Gastrocnemius medialis (tissue), 4 donors: ENCODE measurements at regions of chrX and their contacts with region 1.

Region 1: DNA sequence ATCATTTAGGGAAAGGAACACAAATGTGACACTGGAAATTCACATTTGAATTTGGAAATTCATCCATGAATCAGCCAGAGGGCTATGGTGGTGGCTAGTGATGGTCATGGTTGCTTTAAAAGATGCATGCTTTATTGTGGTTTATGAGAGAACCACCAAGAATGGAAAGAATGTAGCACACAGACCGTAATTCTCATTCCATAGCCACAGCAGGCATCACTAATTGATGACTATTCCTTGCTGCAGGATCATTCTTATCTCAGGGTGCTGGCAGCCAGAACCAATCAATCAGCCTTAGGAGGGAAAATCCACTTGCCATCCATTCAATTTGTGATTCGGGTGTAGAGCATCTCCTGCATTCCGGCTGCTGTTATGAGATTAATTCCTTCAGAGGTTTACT is 115.6 kb downstream of the DHRSX start:
- DNase-seq: no peak
- ATAC-seq: no peak
- H3K4me3 ChIP-seq: no peak overlapping the region
- H3K27ac ChIP-seq: no peak overlapping the region
- H3K4me1 ChIP-seq: peaks cover 22 to 25% of the 10 kb centered on the region in 2 donors
- H3K27me3 ChIP-seq: no peaks in the 10 kb centered on the region
- CTCF ChIP-seq: no peak
- POLR2A ChIP-seq: no peak

Region 2: GRCh38 chrX:2371026-2371711 is 14.1 kb before region 1 on chrX:
- in situ Hi-C with region 1: no loop called
- intact Hi-C with region 1: loop called (anchors 2 kb)
- DNase-seq: no peak
- ATAC-seq: no peak
- H3K4me3 ChIP-seq: no peak overlapping the region
- H3K27ac ChIP-seq: no peak overlapping the region
- H3K4me1 ChIP-seq: no peaks in the 10 kb centered on the region
- H3K27me3 ChIP-seq: no peaks in the 10 kb centered on the region
- CTCF ChIP-seq: no peak
- POLR2A ChIP-seq: no peak

Region 3: DNA sequence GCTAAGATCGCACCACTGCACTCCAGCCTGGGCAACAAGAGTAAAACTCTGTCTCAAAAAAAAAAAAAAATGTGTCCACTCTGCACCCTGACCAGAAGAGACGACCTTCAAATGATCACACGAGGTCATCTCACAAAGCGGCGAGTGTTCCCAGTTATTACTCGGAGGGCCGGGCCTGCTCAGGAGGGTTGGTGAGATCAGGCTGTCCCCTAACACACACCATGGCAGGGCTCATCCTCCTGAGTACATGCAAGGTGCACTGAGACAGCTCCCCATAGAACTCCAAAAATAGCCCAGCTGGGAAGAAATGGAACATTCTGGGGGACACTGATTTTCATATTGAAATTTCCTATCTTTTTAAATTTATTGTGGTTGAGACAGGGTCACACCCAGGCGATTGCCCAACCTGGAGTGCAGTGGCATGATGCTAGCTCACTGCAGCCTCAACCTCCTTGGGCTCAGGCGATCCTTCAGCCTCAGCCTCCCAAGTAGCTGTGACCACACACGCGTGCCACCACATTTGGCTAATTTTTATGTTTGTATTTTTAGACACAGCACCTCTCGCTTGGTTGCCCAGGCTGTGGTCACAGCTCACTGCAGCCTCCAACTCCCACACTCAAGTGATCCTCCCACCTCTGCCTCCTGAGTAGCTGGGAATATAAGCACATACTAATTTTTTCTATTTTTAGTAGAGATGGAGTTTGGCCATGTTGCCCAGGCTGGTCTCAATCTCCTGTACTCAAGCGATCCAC is 64.1 kb after region 1 on chrX:
- in situ Hi-C with region 1: loop called in 1 of 4 experiments (anchors 10 kb)
- intact Hi-C with region 1: no loop called
- DNase-seq: no peak
- ATAC-seq: no peak
- H3K4me3 ChIP-seq: no peak overlapping the region
- H3K27ac ChIP-seq: no peak overlapping the region
- H3K4me1 ChIP-seq: no peaks in the 10 kb centered on the region
- H3K27me3 ChIP-seq: no peaks in the 10 kb centered on the region
- CTCF ChIP-seq: no peak
- POLR2A ChIP-seq: no peak